ENCODE measurements at regions of chr2 and their contacts with region 1.

Region 1: GRCh38 chr2:62456721-62457539 is 49.1 kb downstream of the TMEM17 start:
- DNase-seq: peak; percentile 73
- ATAC-seq: peak; percentile 77
- H3K4me3 ChIP-seq: peak overlapping the region; percentile 2 to 62 (median 51)
- H3K4me3 Mint-ChIP-seq: peak overlapping the region; percentile 76
- H3K27ac ChIP-seq: no peak overlapping the region
- H3K27ac Mint-ChIP-seq: no peak overlapping the region
- H3K4me1 ChIP-seq: peaks cover 9% of the 10 kb centered on the region in 2 donors
- H3K4me1 Mint-ChIP-seq: peaks cover 5% of the 10 kb centered on the region
- H3K27me3 ChIP-seq: peaks cover 0 to 12% (median 7%) of the 10 kb centered on the region in 4 experiments
- H3K27me3 Mint-ChIP-seq: peaks cover 8% of the 10 kb centered on the region
- CTCF ChIP-seq: peak; percentile 96

Region 2: GRCh38 chr2:62467475-62468321 is 10.8 kb after region 1 on chr2:
- CTCF ChIA-PET with region 1: interaction called, 16 read pairs
- POLR2A ChIA-PET with region 1: no interaction called
- intact Hi-C with region 1: no loop called
- DNase-seq: no peak
- ATAC-seq: no peak
- H3K4me3 ChIP-seq: no peak overlapping the region
- H3K4me3 Mint-ChIP-seq: no peak overlapping the region
- H3K27ac ChIP-seq: no peak overlapping the region
- H3K27ac Mint-ChIP-seq: no peak overlapping the region
- H3K4me1 ChIP-seq: no peaks in the 10 kb centered on the region
- H3K4me1 Mint-ChIP-seq: no peaks in the 10 kb centered on the region
- H3K27me3 ChIP-seq: no peaks in the 10 kb centered on the region
- H3K27me3 Mint-ChIP-seq: no peaks in the 10 kb centered on the region
- CTCF ChIP-seq: no peak

Region 3: DNA sequence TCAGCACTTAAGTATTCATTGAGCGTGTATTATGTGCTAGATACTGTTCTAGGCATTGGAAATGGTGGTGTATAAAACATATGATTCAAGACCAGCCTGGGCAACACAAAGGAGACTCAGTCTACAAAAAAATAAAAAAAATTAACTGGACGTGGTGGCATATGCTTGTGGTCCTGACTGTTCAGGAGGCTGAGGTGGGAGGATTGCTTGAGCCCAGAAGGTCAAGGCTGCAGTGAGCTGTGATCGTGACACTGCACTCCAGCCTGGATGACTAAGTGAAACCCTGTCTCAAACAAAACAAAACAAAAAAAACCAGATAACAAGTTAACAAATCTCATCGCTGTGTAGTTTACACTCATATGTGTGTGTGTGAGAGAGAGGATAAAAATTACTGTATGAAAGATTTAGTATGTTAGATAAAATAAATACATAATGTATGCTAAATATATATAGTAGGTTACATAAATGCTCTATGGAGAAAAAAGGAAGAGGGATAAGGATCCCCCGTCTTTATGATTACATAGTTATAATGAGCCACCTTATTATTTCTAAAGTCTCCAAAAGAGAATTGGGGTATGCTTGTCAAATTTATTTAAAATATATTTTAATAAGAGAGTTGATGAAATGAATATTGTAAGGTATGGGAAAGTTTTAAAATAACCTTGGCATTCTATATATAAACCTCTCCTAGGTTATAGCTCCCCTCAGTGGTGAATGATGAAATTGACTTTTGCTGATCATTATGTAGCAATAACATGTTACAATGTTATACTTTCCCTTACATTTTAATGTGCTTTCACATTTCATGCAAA is 317.8 kb after region 1 on chr2:
- CTCF ChIA-PET with region 1: interaction called, 314 read pairs
- POLR2A ChIA-PET with region 1: no interaction called
- intact Hi-C with region 1: no loop called
- DNase-seq: peak; percentile 46
- ATAC-seq: no peak
- H3K4me3 ChIP-seq: no peak overlapping the region
- H3K4me3 Mint-ChIP-seq: no peak overlapping the region
- H3K27ac ChIP-seq: no peak overlapping the region
- H3K27ac Mint-ChIP-seq: no peak overlapping the region
- H3K4me1 ChIP-seq: no peaks in the 10 kb centered on the region
- H3K4me1 Mint-ChIP-seq: no peaks in the 10 kb centered on the region
- H3K27me3 ChIP-seq: no peaks in the 10 kb centered on the region
- H3K27me3 Mint-ChIP-seq: no peaks in the 10 kb centered on the region
- CTCF ChIP-seq: peak; percentile 88

Region 4: DNA sequence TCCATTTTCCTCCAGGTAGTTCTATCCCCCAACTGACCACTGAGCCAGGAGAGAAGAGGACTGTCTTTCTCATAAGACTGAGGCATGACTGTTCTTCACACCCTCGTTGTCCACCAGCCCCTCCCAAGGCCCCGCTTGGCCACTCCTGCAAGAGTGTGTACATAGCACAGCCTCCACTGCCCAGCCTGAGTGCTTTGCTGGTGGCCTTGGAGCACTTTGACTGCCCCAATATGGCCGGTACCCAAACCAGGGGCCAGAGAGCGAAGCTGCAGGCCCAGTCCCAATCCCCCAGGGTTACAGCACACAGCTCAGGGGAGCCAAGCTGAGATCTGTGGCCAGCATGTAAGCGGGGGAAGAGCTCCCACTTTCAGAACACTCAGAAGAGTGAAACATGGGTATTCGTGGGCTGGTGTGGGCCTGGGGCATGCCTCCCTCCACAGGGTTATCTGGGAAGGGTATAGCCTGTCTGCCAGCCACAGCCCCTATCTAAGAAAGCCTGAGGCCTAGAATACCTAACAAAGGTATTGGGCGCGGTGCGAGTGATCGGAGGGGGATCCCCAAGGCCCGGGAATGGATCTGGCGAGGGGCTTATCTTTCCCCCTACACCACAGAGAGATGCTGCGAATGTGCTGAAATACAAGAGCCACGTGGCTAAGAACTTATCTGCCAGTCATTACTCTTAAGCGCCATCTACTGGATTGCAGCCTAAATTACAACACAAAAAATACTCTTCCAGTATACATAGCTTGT is 967.6 kb after region 1 on chr2:
- CTCF ChIA-PET with region 1: interaction called, 17 read pairs
- POLR2A ChIA-PET with region 1: no interaction called
- intact Hi-C with region 1: no loop called
- DNase-seq: peak; percentile 46
- ATAC-seq: no peak
- H3K4me3 ChIP-seq: no peak overlapping the region
- H3K4me3 Mint-ChIP-seq: no peak overlapping the region
- H3K27ac ChIP-seq: no peak overlapping the region
- H3K27ac Mint-ChIP-seq: no peak overlapping the region
- H3K4me1 ChIP-seq: no peaks in the 10 kb centered on the region
- H3K4me1 Mint-ChIP-seq: no peaks in the 10 kb centered on the region
- H3K27me3 ChIP-seq: no peaks in the 10 kb centered on the region
- H3K27me3 Mint-ChIP-seq: no peaks in the 10 kb centered on the region
- CTCF ChIP-seq: peak; percentile 51

Region 5: DNA sequence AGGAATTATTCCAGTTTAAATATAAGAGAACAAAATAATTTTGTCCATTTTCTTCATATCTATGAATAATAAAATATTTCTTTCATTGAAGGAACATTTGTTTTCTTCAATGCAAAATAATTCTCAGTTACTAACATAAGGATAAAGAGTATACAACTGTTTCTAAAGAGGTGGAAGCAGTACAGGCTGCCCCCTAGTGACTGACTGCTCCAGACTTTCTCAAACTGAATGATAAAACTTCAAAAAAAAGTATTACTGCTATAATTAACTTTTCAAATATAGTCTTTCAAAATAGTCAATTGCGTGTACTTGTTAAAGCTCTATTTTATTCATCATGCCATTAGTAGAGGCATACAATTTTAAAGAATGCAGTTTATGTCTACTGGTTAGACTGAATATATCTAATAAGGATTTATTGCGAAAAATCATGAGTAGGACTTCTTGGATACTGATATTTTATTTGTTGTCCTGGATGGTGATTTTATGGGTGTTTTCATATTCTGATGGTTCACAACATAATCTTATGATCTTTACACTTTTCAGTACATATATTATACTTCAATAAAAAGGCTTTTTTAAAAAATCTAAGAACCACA is 1031.3 kb after region 1 on chr2:
- CTCF ChIA-PET with region 1: no interaction called
- POLR2A ChIA-PET with region 1: no interaction called
- intact Hi-C with region 1: loop called (anchors 5 kb)
- DNase-seq: no peak
- ATAC-seq: no peak
- H3K4me3 ChIP-seq: no peak overlapping the region
- H3K4me3 Mint-ChIP-seq: no peak overlapping the region
- H3K27ac ChIP-seq: no peak overlapping the region
- H3K27ac Mint-ChIP-seq: no peak overlapping the region
- H3K4me1 ChIP-seq: no peaks in the 10 kb centered on the region
- H3K4me1 Mint-ChIP-seq: no peaks in the 10 kb centered on the region
- H3K27me3 ChIP-seq: no peaks in the 10 kb centered on the region
- H3K27me3 Mint-ChIP-seq: no peaks in the 10 kb centered on the region
- CTCF ChIP-seq: peak; percentile 38